ENCODE measurements at regions of chr5 and their contacts with region 1.

Region 1: GRCh38 chr5:132064738-132065331 is 4.4 kb downstream of the IL3 start:
- DNase-seq: peak; percentile 85
- CTCF ChIP-seq: peak; percentile 91

Region 2: DNA sequence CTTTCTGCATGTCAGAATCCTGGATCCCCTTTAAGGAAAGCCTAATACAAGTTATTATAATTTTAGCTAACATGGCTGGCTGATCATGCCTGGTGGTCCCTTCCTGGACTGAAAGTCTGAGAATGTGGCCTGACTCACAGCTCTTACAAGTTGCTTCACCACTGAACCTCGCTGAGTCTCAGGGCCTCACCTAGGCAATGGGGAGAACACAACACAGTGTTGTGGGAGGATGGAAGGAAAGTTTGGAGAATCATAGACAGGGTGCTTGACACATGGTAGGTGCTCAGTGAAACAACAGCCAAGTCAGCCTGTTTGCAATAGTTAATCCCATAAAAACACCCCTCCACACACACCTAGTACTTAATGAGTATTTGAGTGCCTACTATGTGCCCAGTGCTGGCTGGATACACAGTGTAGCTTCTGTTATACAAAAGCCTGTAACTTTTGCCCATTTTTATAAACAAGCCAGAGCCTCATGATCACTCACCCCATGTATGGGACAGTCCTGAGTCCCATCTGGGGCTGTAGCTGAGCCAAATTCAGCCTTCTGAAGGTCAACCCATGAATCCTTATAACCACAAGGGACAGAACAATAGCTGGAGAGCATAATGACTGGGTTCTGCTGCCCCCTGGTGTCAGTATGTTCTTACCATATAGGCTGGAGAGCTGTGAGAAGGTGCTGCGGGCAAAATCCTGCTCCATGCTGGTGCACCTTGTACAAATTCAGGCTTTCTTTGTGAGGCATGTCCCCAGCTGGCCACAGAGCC is 57.3 kb before region 1 on chr5:
- CTCF ChIA-PET with region 1: interaction called, 16 read pairs
- POLR2A ChIA-PET with region 1: no interaction called
- DNase-seq: peak; percentile 75
- CTCF ChIP-seq: peak; percentile 62

Region 3: DNA sequence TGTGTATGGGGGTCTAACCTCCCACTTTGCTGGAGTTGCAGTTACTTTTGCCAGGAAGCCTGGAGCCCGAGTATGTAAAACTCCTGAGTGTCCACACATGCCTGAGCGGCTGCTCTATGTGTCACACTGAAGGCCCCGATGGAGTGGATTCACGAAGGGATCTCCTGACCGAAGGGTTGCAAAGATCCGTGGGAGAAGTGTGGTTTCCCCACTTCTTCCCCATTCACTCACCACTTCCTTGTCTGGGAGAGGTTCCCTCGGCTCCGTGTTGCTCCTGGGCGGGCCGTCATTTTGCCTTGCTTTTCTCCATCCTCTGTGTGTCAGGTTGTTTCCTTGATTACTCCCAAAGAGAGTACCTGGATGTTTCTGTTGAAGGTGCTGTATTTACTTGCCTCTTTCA is 20.6 kb before region 1 on chr5:
- CTCF ChIA-PET with region 1: interaction called, 20 read pairs
- POLR2A ChIA-PET with region 1: no interaction called
- DNase-seq: no peak
- CTCF ChIP-seq: no peak

Region 4: DNA sequence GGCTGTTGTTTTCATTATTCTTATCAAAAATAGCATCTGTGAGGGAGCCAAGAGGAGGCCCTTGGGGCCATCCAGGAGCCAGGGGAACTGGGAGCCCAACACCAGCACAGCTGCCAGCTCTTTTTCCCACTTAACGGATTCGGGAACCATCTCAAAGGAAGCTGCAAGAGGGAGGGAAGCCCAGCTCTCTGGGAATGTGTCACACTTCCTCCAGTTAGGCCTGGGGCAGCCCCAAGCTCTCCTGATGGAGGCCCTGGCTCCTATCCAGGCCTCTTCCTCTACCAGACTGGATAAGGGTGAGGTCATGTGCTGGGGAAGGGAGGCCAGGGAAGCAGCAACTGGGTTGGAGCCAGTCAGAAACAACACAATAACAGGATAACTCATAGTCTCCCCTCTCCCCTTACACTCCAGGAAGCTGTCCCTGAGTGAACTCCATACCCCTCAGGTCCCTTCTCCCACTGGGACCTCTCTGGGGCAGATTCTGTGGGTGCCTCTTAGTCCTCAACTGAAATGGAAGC is 21.5 kb after region 1 on chr5:
- CTCF ChIA-PET with region 1: interaction called, 105 read pairs
- POLR2A ChIA-PET with region 1: no interaction called
- DNase-seq: no peak
- CTCF ChIP-seq: no peak

Region 5: DNA sequence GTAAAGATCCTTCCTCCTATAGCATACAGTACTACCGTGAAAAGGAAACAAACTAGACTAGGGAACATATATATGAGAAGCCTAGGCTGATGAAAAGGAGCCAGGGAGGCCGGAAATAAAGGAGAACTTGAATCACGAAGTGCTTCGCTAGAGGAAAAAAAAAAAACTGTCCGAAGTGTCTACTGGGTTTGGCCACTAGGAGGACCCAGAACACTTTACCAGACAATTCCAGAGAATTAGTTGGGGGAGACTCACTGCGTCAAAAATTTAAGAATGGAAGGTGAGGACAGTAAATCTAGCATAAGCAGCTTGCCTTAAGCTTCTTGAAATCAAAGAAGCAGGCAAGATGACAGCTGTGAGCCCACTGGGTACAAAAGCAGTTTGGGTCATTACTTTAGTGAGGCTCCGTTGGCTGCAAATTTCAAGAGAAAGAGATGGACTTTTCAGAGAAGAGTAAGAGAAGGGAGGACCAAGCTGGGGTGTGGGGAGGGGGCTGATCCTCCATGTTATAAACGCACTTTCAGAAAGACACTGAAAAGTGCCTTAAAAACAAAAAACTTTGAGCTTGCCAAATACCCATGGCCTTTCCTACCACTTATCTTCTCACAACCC is 115.4 kb after region 1 on chr5:
- CTCF ChIA-PET with region 1: interaction called, 63 read pairs
- POLR2A ChIA-PET with region 1: no interaction called
- DNase-seq: peak; percentile 64
- CTCF ChIP-seq: peak; percentile 63

Region 6: DNA sequence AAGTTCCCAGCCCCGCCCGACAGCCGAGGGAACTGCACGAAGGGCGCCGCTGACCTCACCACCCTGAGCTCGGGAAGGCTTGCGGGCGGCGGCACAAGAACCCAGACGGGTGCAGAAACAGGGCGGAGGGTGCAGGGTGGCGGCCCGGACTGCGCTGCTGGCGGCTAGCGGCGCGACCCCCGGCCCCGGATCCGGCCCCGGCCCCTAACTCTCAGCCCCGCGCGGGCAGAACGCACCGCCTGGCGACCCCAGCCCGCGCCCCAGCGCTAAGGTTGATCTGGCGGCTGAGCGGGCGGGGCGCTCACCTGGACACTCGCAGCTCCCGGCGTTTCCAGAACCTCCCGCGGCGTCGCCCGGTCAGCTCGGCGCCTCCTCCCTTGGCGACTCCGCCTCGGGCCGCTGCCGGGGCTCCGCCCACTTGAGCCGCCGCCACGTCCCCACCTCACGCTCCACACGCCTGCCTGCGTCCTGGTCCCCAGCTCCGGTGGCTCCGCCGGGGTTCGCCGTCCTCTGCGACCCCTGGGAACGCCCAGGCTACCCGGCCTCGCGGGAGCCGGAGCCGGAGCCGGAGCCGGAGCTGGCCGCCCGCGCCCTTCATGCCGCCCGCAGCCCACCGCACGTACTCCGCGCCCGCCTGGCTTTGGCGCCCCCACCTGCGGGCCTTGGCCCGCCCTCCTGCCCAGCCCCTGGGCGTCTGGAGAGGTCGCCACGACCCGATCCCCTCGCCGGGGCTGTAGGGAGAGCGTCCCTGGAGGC is 162.8 kb after region 1 on chr5 and contains the start of gene P4HA2:
- CTCF ChIA-PET with region 1: interaction called, 22 read pairs
- POLR2A ChIA-PET with region 1: no interaction called
- DNase-seq: peak; percentile 94
- CTCF ChIP-seq: no peak